ENCODE measurements at regions of chr18 and their contacts with region 1.

Region 1: GRCh38 chr18:74147779-74148542 is at the starts of genes FBXO15 and TIMM21:
- DNase-seq: peak; percentile 92 to 97 (median 96)
- ATAC-seq: peak; percentile 91
- H3K4me3 ChIP-seq: peak within 1 kb of the TSS; percentile 82
- H3K4me3 Mint-ChIP-seq: peak within 1 kb of the TSS; percentile 95 to 100 (median 97)
- H3K27ac ChIP-seq: peak within 1 kb of the TSS; percentile 92
- H3K27ac Mint-ChIP-seq: peak within 1 kb of the TSS; percentile 98 to 100 (median 99)
- H3K4me1 ChIP-seq: peaks cover 15 to 25% of the 10 kb centered on the region in 2 donors
- H3K4me1 Mint-ChIP-seq: peaks cover 23 to 60% (median 55%) of the 10 kb centered on the region in 7 donors
- H3K27me3 ChIP-seq: no peaks in the 10 kb centered on the region
- H3K27me3 Mint-ChIP-seq: peaks cover 0 to 7% (median 0%) of the 10 kb centered on the region in 5 donors
- total RNA-seq, gene FBXO15: 1.1 to 4.9 (median 1.3) TPM
- total RNA-seq, gene TIMM21: 9.7 to 30.2 (median 27.9) TPM

Region 2: GRCh38 chr18:72623444-72623843 is 1524.5 kb before region 1 on chr18:
- CTCF ChIA-PET with region 1: no interaction called
- POLR2A ChIA-PET with region 1: no interaction called
- intact Hi-C with region 1: no loop called
- DNase-seq: no peak
- ATAC-seq: no peak
- H3K4me3 ChIP-seq: no peak overlapping the region
- H3K4me3 Mint-ChIP-seq: no peak overlapping the region
- H3K27ac ChIP-seq: no peak overlapping the region
- H3K27ac Mint-ChIP-seq: no peak overlapping the region
- H3K4me1 ChIP-seq: no peaks in the 10 kb centered on the region
- H3K4me1 Mint-ChIP-seq: no peaks in the 10 kb centered on the region
- H3K27me3 ChIP-seq: no peaks in the 10 kb centered on the region
- H3K27me3 Mint-ChIP-seq: peaks cover 0 to 10% (median 0%) of the 10 kb centered on the region in 5 donors

Region 3: GRCh38 chr18:74063023-74063422 is 84.9 kb before region 1 on chr18:
- CTCF ChIA-PET with region 1: no interaction called
- POLR2A ChIA-PET with region 1: interaction called, 3 read pairs
- intact Hi-C with region 1: loop called in 1 of 2 experiments (anchors 1 kb)
- DNase-seq: peak in 2 of 9 donors; percentile 17 to 48
- ATAC-seq: no peak
- H3K4me3 ChIP-seq: no peak overlapping the region
- H3K4me3 Mint-ChIP-seq: peak overlapping the region in 2 of 10 donors; percentile 18 to 21
- H3K27ac ChIP-seq: no peak overlapping the region
- H3K27ac Mint-ChIP-seq: peak overlapping the region in 6 of 9 donors; percentile 25 to 73 (median 56)
- H3K4me1 ChIP-seq: peaks cover 0 to 24% of the 10 kb centered on the region in 2 donors
- H3K4me1 Mint-ChIP-seq: peaks cover 0 to 47% (median 37%) of the 10 kb centered on the region in 7 donors
- H3K27me3 ChIP-seq: no peaks in the 10 kb centered on the region
- H3K27me3 Mint-ChIP-seq: peaks cover 0 to 23% (median 0%) of the 10 kb centered on the region in 5 donors

Region 4: DNA sequence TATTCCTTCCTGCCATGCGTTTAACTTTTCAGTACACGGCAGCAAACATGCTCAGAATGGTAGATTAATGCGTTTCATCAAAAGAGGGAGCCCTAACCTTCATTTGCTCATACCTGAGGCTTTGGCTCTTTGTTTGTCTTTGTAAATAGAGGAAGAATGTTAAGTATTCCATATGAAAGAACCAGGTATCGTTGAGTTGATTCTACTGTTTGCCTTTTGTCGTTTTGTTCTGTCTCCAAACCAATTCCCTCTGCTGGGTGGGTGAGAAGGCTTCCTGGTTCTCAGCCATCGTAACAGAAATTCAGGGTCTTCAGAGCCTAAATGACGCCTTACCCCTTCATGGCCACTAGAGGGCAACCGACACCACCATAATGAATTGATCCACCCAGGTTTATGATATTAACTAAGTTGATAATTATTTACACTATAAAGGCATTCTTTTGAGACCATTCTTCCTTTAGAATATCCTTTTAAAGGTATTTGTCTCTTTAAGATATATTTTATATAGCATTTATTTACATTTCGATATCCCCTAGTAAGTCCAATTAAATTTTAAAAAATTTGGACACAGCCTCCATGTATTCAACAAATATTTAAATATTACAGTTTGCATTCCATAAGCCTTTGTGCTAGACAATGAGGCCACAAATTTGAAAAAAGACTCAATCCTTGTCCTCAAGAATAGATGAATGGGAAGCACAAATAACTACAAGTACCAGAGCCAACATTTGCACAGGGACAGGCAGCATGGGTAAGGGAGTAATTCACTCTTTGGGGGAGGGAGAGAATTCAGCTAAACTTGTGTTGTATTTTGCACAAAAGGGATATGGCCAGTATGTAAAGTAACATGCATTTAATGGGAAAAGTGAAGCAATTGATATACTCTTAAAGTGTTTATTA is 48.5 kb after region 1 on chr18:
- CTCF ChIA-PET with region 1: no interaction called
- POLR2A ChIA-PET with region 1: no interaction called
- intact Hi-C with region 1: loop called (anchors 1 to 2 kb)
- DNase-seq: peak in 7 of 9 donors; percentile 51 to 80 (median 71)
- ATAC-seq: peak; percentile 95
- H3K4me3 ChIP-seq: peak overlapping the region; percentile 55
- H3K4me3 Mint-ChIP-seq: peak overlapping the region; percentile 63 to 90 (median 86)
- H3K27ac ChIP-seq: peak overlapping the region; percentile 63
- H3K27ac Mint-ChIP-seq: peak overlapping the region in 8 of 9 donors; percentile 51 to 90 (median 79)
- H3K4me1 ChIP-seq: no peaks in the 10 kb centered on the region
- H3K4me1 Mint-ChIP-seq: peaks cover 0 to 7% (median 0%) of the 10 kb centered on the region in 7 donors
- H3K27me3 ChIP-seq: no peaks in the 10 kb centered on the region
- H3K27me3 Mint-ChIP-seq: peaks cover 1 to 11% (median 2%) of the 10 kb centered on the region in 5 donors

Region 5: DNA sequence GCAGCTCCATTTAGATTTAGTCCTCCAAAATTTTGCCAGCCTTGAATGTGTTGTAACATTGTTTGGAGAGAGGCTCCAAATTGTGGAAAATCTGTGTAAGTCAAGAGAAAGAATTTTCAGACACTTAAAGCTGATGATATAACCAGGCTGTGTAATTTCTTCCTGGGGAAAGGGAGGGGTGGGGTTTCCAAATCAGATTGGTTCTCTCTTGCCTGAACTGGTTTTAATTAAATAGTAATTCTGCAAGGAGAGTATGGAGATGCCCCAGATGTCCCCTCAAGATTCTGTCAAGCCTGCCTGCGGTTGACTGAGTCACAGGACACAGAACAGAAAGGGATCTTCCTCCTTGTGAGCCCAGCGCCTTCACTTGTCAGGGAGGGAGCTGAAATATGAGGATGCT is 222.2 kb after region 1 on chr18:
- CTCF ChIA-PET with region 1: no interaction called
- POLR2A ChIA-PET with region 1: no interaction called
- intact Hi-C with region 1: loop called in 1 of 2 experiments (anchors 1 kb)
- DNase-seq: no peak
- ATAC-seq: no peak
- H3K4me3 ChIP-seq: no peak overlapping the region
- H3K4me3 Mint-ChIP-seq: peak overlapping the region in 3 of 10 donors; percentile 8 to 30 (median 30)
- H3K27ac ChIP-seq: no peak overlapping the region
- H3K27ac Mint-ChIP-seq: peak overlapping the region in 3 of 9 donors; percentile 42 to 88 (median 55)
- H3K4me1 ChIP-seq: peaks cover 22 to 54% of the 10 kb centered on the region in 2 donors
- H3K4me1 Mint-ChIP-seq: peaks cover 26 to 72% (median 54%) of the 10 kb centered on the region in 7 donors
- H3K27me3 ChIP-seq: peaks cover 0 to 6% of the 10 kb centered on the region in 2 donors
- H3K27me3 Mint-ChIP-seq: peaks cover 0 to 28% (median 0%) of the 10 kb centered on the region in 5 donors

Region 6: DNA sequence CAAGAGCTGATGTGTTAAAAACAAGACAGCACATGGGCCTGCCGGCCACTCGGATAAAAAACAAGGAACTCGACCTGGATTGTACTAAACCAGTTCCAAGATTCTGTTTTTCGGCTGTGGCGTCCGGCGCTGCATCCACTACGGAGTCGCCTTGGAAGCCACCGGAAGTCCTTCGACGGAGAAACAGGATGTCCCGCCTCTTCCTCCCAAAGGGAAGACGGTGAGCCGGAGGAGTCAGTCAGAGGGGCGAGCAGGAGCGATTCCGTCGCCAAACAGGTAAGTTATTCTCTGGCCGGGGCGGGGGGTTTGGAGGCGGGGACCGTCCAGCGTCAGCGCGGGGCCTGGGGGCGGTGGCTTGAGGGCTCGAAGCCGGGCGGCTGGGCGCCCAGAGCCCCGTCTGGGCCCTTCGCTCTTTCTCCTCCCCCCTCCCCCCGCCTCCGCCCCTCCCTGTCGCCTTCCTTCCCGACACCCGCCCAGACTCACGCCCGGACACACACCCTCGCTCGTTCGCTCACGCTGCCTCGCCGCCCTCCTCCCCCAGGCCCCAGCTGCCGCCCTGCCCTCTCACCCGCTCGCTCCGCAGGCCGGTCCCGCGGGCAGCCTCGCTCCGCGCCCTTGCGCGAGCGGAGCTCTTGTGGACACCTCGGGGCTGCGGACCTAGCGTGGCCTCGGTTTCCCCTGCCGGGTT is 449.8 kb after region 1 on chr18 and contains the start of gene ZNF407:
- CTCF ChIA-PET with region 1: no interaction called
- POLR2A ChIA-PET with region 1: interaction called, 3 read pairs
- intact Hi-C with region 1: loop called (anchors 1 kb)
- DNase-seq: peak; percentile 77 to 94 (median 90)
- ATAC-seq: peak; percentile 84
- H3K4me3 ChIP-seq: peak within 1 kb of the TSS; percentile 100
- H3K4me3 Mint-ChIP-seq: peak within 1 kb of the TSS; percentile 89 to 96 (median 95)
- H3K27ac ChIP-seq: peak within 1 kb of the TSS; percentile 88
- H3K27ac Mint-ChIP-seq: peak within 1 kb of the TSS; percentile 95 to 99 (median 98)
- H3K4me1 ChIP-seq: peaks cover 26 to 27% of the 10 kb centered on the region in 2 donors
- H3K4me1 Mint-ChIP-seq: peaks cover 33 to 74% (median 61%) of the 10 kb centered on the region in 7 donors
- H3K27me3 ChIP-seq: no peaks in the 10 kb centered on the region
- H3K27me3 Mint-ChIP-seq: no peaks in the 10 kb centered on the region
- total RNA-seq, gene ZNF407: 23.1 to 31.3 (median 29.7) TPM

Measured in naive thymus-derived CD4-positive, alpha-beta T cell (primary cell).